Caco-2 (cell line): ENCODE measurements at regions of chr3 and their contacts with region 1.

Region 1: GRCh38 chr3:43330981-43331380 is 44.6 kb downstream of the SNRK start:
- DNase-seq: no peak
- H3K4me3 ChIP-seq: no peak overlapping the region
- H3K4me3 Mint-ChIP-seq: no peak overlapping the region
- H3K27ac Mint-ChIP-seq: no peak overlapping the region
- H3K4me1 ChIP-seq: peaks cover 5% of the 10 kb centered on the region; the same call in 1 of the 2 replicates
- H3K4me1 Mint-ChIP-seq: peaks cover 10% of the 10 kb centered on the region
- H3K27me3 ChIP-seq: no peaks in the 10 kb centered on the region
- H3K27me3 Mint-ChIP-seq: no peaks in the 10 kb centered on the region
- CTCF ChIP-seq: no peak

Region 2: GRCh38 chr3:43405888-43406642 is 75.1 kb after region 1 on chr3:
- CTCF ChIA-PET with region 1: no interaction called
- POLR2A ChIA-PET with region 1: interaction called, 15 read pairs
- intact Hi-C with region 1: no loop called
- DNase-seq: no peak
- H3K4me3 ChIP-seq: no peak overlapping the region
- H3K4me3 Mint-ChIP-seq: no peak overlapping the region
- H3K27ac Mint-ChIP-seq: no peak overlapping the region
- H3K4me1 ChIP-seq: 0 out of 2 replicates have a peak, but pooled peaks cover 1% of the 10 kb centered on the region
- H3K4me1 Mint-ChIP-seq: no peaks in the 10 kb centered on the region
- H3K27me3 ChIP-seq: no peaks in the 10 kb centered on the region
- H3K27me3 Mint-ChIP-seq: no peaks in the 10 kb centered on the region
- CTCF ChIP-seq: no peak

Region 3: DNA sequence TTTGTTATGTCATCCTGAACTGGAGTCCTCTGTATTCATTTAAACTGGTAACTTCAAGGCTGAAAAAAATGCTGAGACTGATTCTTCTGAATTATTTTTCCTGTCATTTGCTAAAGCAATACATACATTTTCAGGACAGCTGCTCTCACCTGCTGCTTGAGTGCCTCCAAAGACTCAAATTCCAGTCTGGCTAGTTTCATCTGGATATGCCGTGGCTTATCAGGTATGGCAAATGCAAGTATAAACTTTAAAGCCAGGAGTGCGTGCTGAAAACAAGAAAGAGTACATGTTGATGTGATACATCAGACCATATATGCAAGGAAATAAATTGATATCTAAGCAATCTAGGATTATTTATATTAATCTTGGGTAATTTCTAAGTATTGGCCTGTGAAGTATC is 101.5 kb after region 1 on chr3:
- CTCF ChIA-PET with region 1: no interaction called
- POLR2A ChIA-PET with region 1: no interaction called
- intact Hi-C with region 1: no loop called
- DNase-seq: no peak
- H3K4me3 ChIP-seq: no peak overlapping the region
- H3K4me3 Mint-ChIP-seq: no peak overlapping the region
- H3K27ac Mint-ChIP-seq: no peak overlapping the region
- H3K4me1 ChIP-seq: no peaks in the 10 kb centered on the region
- H3K4me1 Mint-ChIP-seq: no peaks in the 10 kb centered on the region
- H3K27me3 ChIP-seq: no peaks in the 10 kb centered on the region
- H3K27me3 Mint-ChIP-seq: no peaks in the 10 kb centered on the region
- CTCF ChIP-seq: no peak